ENCODE measurements at regions of chr7 and their contacts with region 1.

Region 1: DNA sequence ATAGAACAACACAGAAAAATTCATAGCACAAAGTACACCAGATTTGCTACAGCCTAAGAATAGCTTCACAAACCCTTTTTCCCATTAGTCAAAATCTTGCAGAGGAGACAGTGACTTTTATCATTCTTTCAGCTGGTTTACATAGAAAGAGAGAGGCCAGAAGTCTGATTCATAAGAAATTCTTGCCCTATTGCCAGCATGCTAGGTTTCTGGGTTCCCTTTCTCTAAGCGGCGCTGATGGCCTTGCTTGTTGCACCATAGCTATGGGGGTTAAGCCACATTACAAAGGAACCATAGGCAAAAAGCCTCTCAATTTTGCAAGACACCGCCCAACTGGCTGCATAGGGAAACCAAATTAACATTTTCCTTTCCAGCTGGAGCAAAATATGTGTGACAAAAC is 87.4 kb downstream of the ZNF467 start:
- DNase-seq: no peak
- ATAC-seq: no peak
- H3K4me3 ChIP-seq: no peak overlapping the region
- H3K27ac ChIP-seq: no peak overlapping the region
- H3K4me1 ChIP-seq: peaks cover 6% of the 10 kb centered on the region; the same call in 2 of the 3 replicates
- CTCF ChIP-seq: no peak
- EP300 ChIP-seq: no peak
- POLR2A ChIP-seq: no peak
- RAD21 ChIP-seq: no peak

Region 2: DNA sequence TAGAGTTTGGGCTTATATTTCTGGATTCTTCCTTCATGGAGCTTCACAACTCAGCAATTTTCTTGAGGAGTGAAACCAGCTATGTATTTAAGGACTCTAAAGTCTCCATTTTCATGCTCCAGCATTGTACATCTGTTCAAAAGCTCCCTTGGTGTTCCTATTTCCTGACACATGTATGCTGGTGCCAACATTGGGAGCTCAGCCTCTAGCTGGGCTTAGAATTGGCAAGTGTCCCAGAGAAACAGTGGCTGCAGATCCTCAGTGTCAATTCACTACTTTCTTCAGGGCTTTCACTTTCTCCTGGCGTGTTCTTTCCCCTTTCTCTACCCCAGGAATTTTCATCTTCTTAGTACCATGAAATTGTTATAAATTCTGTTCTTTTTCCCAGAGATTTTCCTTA is 15.7 kb before region 1 on chr7:
- CTCF ChIA-PET with region 1: interaction called, 13 read pairs
- POLR2A ChIA-PET with region 1: no interaction called
- DNase-seq: no peak
- ATAC-seq: no peak
- H3K4me3 ChIP-seq: no peak overlapping the region
- H3K27ac ChIP-seq: no peak overlapping the region
- H3K4me1 ChIP-seq: no peaks in the 10 kb centered on the region
- CTCF ChIP-seq: no peak
- EP300 ChIP-seq: no peak
- POLR2A ChIP-seq: no peak
- RAD21 ChIP-seq: no peak